Vagina (tissue), 2 donors: ENCODE measurements at regions of chr11 and their contacts with region 1.

Region 1: DNA sequence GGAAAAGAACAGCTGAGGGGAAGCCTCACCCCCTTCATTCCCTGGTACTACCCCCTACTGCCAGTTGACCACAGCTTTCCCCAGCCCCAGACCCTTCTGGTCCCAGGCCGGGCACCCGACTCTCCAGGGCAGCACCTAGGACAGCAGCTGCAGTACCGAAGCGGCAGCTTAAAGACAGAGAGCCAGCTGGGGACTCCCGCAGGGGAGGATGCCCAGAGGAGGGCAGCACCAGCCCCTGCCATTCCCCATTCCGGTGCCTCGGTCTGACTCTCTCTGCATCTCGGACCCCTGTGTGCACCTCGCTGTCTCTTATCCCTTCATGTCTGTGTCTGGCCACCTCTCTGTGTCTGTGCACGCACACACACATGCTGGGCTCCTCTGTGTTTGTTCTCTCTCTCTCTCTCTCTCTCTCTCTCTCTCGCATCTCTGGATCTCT is 9.4 kb downstream of the IGSF9B start:
- DNase-seq: no peak
- H3K4me3 ChIP-seq: peak overlapping the region in 1 of 2 donors; percentile 18
- H3K27ac ChIP-seq: peak overlapping the region; percentile 58
- H3K4me1 ChIP-seq: peaks cover 61% of the 10 kb centered on the region
- H3K27me3 ChIP-seq: no peaks in the 10 kb centered on the region
- CTCF ChIP-seq: no peak
- POLR2A ChIP-seq: no peak

Region 2: GRCh38 chr11:134040386-134041302 is 93.3 kb after region 1 on chr11:
- intact Hi-C with region 1: loop called (anchors 5 kb)
- DNase-seq: no peak
- H3K4me3 ChIP-seq: no peak overlapping the region
- H3K27ac ChIP-seq: peak overlapping the region; percentile 69
- H3K4me1 ChIP-seq: peaks cover 28% of the 10 kb centered on the region
- H3K27me3 ChIP-seq: no peaks in the 10 kb centered on the region
- CTCF ChIP-seq: no peak
- POLR2A ChIP-seq: no peak